ENCODE measurements at regions of chr1 and their contacts with region 1.

Region 1: GRCh38 chr1:163174524-163175437 is 27.9 kb downstream of the RGS5 start:
- DNase-seq: peak; percentile 32
- ATAC-seq: peak; percentile 85
- H3K4me3 ChIP-seq: no peak overlapping the region
- H3K27ac ChIP-seq: no peak overlapping the region
- H3K4me1 ChIP-seq: no peaks in the 10 kb centered on the region
- H3K27me3 ChIP-seq: no peaks in the 10 kb centered on the region
- CTCF ChIP-seq: peak; percentile 83 to 93 (median 89)
- POLR2A ChIP-seq: no peak
- RAD21 ChIP-seq: peak; percentile 84

Region 2: DNA sequence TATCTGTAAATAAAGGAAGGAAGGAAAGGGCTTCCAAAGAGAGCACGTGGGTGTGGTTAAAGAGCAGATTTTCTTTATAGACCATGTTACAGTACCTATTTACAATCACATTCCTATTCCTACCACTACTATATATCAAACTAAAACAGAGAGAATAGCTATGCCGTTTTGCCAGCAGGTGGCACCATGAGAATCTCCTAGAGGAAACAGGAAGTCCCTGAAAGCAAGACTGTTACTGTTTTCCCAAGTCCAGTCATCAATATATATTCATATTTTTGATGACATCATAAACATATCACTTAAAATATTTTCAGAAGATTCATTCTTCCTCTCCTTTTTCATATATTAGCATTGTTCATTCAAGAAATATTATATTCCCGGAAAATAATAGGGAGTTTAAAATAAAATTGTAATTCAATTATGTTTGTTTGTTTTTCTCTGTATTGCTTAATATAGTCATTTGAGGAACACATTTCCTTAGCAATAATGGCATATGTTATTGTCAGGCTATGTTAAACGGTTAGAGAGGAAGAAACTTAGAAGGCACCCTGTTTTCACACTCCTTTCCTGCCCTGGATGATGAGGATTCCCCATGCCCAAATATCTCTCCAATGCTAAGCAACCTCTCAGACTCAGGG is 320.4 kb before region 1 on chr1:
- CTCF ChIA-PET with region 1: interaction called, 3 read pairs
- POLR2A ChIA-PET with region 1: no interaction called
- RAD21 ChIA-PET with region 1: no interaction called
- intact Hi-C with region 1: loop called (anchors 1 kb)
- DNase-seq: peak; percentile 77
- ATAC-seq: peak; percentile 91
- H3K4me3 ChIP-seq: no peak overlapping the region
- H3K27ac ChIP-seq: no peak overlapping the region
- H3K4me1 ChIP-seq: peaks cover 16 to 26% of the 10 kb centered on the region in 2 experiments
- H3K27me3 ChIP-seq: no peaks in the 10 kb centered on the region
- CTCF ChIP-seq: peak; percentile 75 to 85 (median 79)
- POLR2A ChIP-seq: no peak
- RAD21 ChIP-seq: peak; percentile 84

Region 3: DNA sequence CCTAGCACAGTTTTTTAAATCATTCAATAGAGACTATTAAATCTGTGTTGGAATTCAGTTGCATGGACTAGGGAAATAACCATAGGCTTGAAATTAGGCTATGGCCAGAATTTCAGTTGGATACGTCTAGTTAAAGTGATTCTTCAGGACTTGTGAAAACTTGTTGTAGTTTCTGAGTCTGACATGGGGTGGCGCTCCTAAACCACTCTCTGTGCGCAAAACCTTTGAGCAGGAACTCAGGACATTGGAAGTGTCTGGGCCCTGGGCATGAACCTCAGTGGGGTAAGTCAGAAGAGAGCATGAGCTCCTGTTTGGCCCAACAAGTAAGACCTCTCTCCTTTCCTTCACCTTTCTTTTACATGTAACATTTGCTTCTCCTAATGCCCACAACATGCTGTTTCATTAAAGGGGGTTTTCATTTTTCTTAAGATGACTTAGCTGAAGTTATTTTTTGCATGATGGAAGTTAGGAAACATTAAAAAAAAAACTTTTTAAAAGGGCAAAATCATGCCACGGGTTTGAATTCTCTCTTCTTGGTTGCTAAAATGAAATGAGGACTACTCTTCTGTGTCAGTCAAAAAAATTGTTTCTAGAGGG is 296.7 kb before region 1 on chr1:
- CTCF ChIA-PET with region 1: interaction called, 19 read pairs
- POLR2A ChIA-PET with region 1: no interaction called
- RAD21 ChIA-PET with region 1: interaction called in 1 of 2 experiments, 4 read pairs
- intact Hi-C with region 1: loop called (anchors 1 kb)
- DNase-seq: peak; percentile 68
- ATAC-seq: peak; percentile 93
- H3K4me3 ChIP-seq: no peak overlapping the region
- H3K27ac ChIP-seq: no peak overlapping the region
- H3K4me1 ChIP-seq: no peaks in the 10 kb centered on the region
- H3K27me3 ChIP-seq: no peaks in the 10 kb centered on the region
- CTCF ChIP-seq: peak; percentile 81 to 88 (median 85)
- POLR2A ChIP-seq: no peak
- RAD21 ChIP-seq: peak; percentile 96

Region 4: DNA sequence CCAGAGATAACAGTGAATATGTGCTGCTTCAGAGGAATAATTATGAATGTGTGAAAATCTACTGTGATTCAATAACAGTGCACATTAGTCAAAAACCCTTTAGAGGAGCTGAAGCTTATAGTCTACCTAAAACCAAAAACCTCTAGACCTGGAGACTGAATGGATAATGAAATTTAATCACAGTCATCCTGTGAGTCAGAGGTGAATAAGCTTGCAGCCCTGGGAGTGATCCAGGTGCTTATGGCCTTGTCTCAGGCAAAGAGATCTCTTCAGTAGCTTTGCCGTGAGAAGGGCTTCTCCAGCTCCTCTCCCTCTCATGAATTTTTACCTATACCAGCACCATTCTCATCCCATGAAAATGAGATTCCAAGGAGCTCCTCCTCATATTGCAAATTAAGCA is 186.9 kb before region 1 on chr1:
- CTCF ChIA-PET with region 1: interaction called, 3 read pairs
- POLR2A ChIA-PET with region 1: no interaction called
- RAD21 ChIA-PET with region 1: no interaction called
- intact Hi-C with region 1: loop called (anchors 2 kb)
- DNase-seq: peak; percentile 6
- ATAC-seq: peak; percentile 42; the same call in 1 of the 2 replicates
- H3K4me3 ChIP-seq: no peak overlapping the region
- H3K27ac ChIP-seq: no peak overlapping the region
- H3K4me1 ChIP-seq: peaks cover 0 to 8% of the 10 kb centered on the region in 2 experiments; a peak in 2 of 4 replicates
- H3K27me3 ChIP-seq: no peaks in the 10 kb centered on the region
- CTCF ChIP-seq: no peak
- POLR2A ChIP-seq: no peak
- RAD21 ChIP-seq: no peak

Region 5: GRCh38 chr1:163071405-163072255 is 103.2 kb before region 1 on chr1:
- CTCF ChIA-PET with region 1: interaction called, 12 read pairs
- POLR2A ChIA-PET with region 1: no interaction called
- RAD21 ChIA-PET with region 1: no interaction called
- intact Hi-C with region 1: loop called (anchors 1 kb)
- DNase-seq: peak; percentile 60
- ATAC-seq: peak; percentile 86
- H3K4me3 ChIP-seq: no peak overlapping the region
- H3K27ac ChIP-seq: no peak overlapping the region
- H3K4me1 ChIP-seq: peaks cover 0 to 16% of the 10 kb centered on the region in 2 experiments; a peak in 3 of 4 replicates
- H3K27me3 ChIP-seq: peaks cover 25% of the 10 kb centered on the region
- CTCF ChIP-seq: peak; percentile 78 to 86 (median 85)
- POLR2A ChIP-seq: no peak
- RAD21 ChIP-seq: peak; percentile 59

Region 6: DNA sequence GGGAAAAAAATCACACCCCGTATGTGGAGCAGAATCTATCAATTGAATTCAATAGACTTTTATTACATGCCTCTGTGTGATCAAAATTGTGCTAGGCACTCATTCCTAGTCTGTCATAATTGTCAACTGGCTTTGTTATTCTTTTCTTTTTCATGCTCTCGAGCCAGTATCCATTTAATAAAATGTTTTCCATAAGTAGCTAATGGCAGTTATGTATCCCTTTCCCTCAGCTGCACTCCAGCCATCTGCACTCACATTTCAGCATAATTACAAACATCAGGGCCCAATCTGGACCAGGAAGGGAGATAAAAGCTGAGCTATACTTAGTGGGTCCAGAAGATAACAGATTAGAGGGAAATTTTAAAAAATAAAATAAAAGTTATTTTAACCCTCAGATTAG is 12.1 kb after region 1 on chr1:
- CTCF ChIA-PET with region 1: no interaction called
- POLR2A ChIA-PET with region 1: no interaction called
- RAD21 ChIA-PET with region 1: no interaction called
- intact Hi-C with region 1: no loop called
- DNase-seq: no peak
- ATAC-seq: no peak
- H3K4me3 ChIP-seq: no peak overlapping the region
- H3K27ac ChIP-seq: no peak overlapping the region
- H3K4me1 ChIP-seq: no peaks in the 10 kb centered on the region
- H3K27me3 ChIP-seq: no peaks in the 10 kb centered on the region
- CTCF ChIP-seq: no peak
- POLR2A ChIP-seq: no peak
- RAD21 ChIP-seq: no peak

Region 7: DNA sequence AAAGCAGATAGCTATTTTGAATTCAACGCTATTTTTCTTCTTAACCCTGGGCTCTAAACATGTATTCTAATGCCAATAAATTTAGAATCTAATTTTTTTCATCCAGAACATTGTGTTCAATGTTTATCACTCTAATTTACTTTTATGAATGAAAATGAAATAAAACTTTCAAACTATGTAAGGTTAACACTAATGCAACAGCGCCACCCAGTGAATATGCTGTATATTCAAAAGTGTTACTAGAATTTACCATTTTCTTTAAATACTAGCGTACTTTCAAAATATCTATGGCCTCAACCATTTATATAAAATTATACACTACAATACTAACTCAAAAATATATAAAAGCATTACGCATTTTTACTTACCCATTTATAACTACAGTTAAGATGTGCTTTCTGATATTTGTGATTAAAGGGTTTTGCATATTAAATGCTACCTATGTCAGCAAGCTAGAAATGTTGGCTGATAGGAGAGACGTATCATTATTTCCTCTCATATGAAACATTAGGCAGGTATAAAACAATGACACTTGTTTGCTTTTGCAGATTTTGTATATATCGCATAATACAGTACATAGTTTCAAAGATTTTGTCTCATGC is 141.1 kb after region 1 on chr1:
- CTCF ChIA-PET with region 1: interaction called, 12 read pairs
- POLR2A ChIA-PET with region 1: no interaction called
- RAD21 ChIA-PET with region 1: interaction called in 1 of 2 experiments, 3 read pairs
- intact Hi-C with region 1: loop called (anchors 5 kb)
- DNase-seq: no peak
- ATAC-seq: no peak
- H3K4me3 ChIP-seq: no peak overlapping the region
- H3K27ac ChIP-seq: no peak overlapping the region
- H3K4me1 ChIP-seq: peaks cover 0 to 9% of the 10 kb centered on the region in 2 experiments; a peak in 3 of 4 replicates
- H3K27me3 ChIP-seq: no peaks in the 10 kb centered on the region
- CTCF ChIP-seq: peak; percentile 44 to 80 (median 70); a peak in 5 of 6 replicates
- POLR2A ChIP-seq: no peak
- RAD21 ChIP-seq: peak; percentile 71